Naive thymus-derived CD8-positive, alpha-beta T cell (primary cell): ENCODE measurements at regions of chr1 and their contacts with region 1.

Region 1: DNA sequence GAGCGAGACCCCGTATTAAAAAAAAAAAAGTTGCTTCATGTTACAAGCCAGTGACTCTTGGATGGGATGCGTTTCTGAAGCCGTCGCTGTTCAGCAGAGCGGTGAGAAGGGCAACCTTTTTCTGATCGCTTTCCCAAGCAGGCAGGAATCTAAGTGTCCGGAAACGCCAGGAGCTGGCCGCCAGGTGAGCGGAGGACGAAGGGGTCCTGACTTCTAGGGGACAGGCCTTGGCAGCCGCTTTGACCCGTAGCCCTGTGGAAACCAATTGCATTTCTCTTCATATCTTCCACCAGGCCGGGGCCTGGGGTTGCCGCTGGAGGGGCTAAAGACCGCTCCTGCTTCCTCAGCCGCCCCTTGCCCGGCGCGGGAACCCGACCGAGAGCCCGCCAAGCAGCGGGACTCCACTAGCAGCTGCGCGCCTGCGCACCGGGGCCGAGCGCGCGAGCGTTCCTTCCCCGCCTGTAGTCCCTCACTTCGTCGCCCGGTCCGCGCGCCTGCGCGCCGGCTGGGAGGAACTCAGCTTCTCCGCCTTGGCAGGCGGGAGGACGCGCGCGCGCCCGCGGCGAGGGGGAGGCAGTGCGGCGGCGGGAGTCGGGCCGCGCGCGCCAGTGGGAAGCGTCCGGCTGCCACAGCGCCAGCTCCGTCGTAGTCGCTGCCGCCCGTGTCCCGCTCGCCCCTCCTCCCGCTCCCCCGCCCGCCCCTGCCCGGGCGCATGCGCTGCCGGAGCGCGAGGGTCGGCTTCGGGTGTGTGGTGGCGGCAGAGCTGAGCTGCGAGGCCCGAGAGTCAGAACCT is at the start of gene SPEN:
- DNase-seq: peak; percentile 91 to 99 (median 98)
- ATAC-seq: peak; percentile 82 to 83
- H3K4me3 Mint-ChIP-seq: peak within 1 kb of the TSS; percentile 96 to 99 (median 98)
- H3K27ac Mint-ChIP-seq: peak within 1 kb of the TSS; percentile 96 to 98 (median 98)
- H3K4me1 Mint-ChIP-seq: peaks cover 13 to 63% (median 38%) of the 10 kb centered on the region in 4 donors
- H3K27me3 Mint-ChIP-seq: no peaks in the 10 kb centered on the region
- polyA plus RNA-seq, gene SPEN: 4.0 to 38.0 (median 8.1) TPM

Region 2: DNA sequence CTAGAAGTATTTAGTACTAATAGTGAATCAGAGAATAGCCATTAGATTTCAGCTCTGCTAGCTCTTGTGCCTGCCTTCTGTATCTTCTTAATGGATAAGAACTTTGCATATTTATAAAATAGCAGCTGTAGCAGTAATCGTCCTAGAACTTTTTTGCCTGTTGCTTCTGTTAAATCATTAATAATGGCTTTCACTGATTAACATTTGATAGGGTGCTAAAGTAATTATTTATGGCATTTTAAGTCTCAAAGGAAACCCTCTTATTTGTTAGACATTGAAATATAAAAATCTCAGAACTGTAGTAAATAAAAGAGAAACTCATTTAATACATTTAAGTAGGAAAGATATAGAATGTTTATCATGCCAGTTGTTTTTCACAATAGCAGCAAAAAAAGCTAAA is 27.2 kb after region 1 on chr1:
- POLR2A ChIA-PET with region 1: no interaction called
- DNase-seq: no peak
- ATAC-seq: no peak
- H3K4me3 Mint-ChIP-seq: peak overlapping the region in 1 of 10 donors; percentile 15
- H3K27ac Mint-ChIP-seq: peak overlapping the region in 3 of 10 donors; percentile 9 to 70 (median 17)
- H3K4me1 Mint-ChIP-seq: peaks cover 29 to 73% (median 59%) of the 10 kb centered on the region in 4 donors
- H3K27me3 Mint-ChIP-seq: no peaks in the 10 kb centered on the region

Region 3: DNA sequence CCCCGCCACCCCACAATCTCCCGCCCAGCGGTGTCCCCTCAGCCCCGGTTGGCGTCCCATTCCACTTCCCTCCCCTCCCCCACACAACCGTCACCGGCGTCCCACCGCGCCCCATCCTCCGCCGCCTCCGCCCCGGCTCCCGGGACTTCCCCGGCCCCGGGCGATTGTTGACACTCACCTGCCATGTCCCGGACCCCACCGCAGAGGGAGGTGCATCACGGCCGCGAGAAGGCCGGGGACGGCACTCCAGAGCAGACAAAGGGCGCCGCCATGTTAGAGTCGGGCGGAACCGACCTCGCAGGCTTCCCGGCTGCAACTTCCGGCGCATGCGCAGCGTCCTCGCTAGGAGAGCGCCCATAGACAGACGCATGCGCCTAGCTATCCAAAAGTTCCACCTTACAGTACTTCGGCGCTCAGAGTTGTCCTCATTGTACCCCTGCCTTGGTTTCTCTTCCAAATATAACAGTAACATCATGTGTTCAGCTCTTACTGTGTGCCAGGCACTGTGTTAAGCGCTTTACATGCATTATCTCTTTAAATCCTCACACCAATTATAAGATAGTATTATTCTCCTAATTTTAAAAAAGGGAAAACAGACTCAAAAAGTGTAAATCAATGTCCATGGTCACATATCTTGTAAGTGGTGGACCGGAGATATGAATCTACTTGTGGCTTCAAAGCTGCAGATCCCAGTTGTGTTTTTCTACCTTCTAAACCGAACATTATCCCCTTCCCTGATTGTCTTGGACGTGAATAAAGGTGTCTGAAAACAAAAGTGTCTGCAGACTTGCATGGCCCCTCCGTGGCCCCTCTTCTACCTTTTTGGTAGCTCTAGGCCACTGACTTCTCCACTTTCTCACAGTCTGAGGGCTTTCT is 128.7 kb after region 1 on chr1 and contains the start of gene ZBTB17:
- POLR2A ChIA-PET with region 1: interaction called, 14 read pairs
- DNase-seq: peak; percentile 92 to 97 (median 96)
- ATAC-seq: peak; percentile 90 to 92
- H3K4me3 Mint-ChIP-seq: peak within 1 kb of the TSS; percentile 87 to 96 (median 90)
- H3K27ac Mint-ChIP-seq: peak within 1 kb of the TSS; percentile 89 to 96 (median 94)
- H3K4me1 Mint-ChIP-seq: peaks cover 22 to 43% (median 39%) of the 10 kb centered on the region in 4 donors
- H3K27me3 Mint-ChIP-seq: peaks cover 0 to 2% (median 0%) of the 10 kb centered on the region in 5 donors
- polyA plus RNA-seq, gene ZBTB17: 10.2 to 23.3 (median 11.1) TPM